ENCODE measurements at regions of chr6 and their contacts with region 1.

Region 1: GRCh38 chr6:17015144-17015543 is 86.7 kb upstream of the STMND1 start:
- DNase-seq: no peak
- H3K4me3 ChIP-seq: no peak overlapping the region
- H3K27ac ChIP-seq: no peak overlapping the region
- H3K4me1 ChIP-seq: peaks cover 22% of the 10 kb centered on the region
- H3K27me3 ChIP-seq: no peaks in the 10 kb centered on the region
- CTCF ChIP-seq: no peak
- POLR2A ChIP-seq: no peak

Region 2: DNA sequence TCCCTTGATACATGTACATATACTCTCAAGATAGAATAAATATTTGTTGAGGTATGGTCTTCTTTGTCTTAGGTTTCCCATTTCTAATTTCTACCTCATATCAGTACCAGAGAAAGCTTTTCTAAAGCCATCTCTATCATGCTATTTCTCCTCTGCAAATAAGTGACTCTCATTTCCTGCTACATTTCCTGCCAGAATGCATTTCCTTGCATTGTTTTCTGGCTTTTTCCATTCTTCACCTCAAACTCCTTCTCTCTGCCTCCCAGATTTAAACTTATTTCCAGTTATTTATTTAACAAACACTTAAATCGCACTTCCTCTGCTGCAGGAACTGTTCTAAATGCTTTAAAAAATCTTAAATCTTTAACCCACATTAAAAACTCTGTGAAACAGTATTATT is 12.3 kb after region 1 on chr6:
- CTCF ChIA-PET with region 1: interaction called, 10 read pairs
- POLR2A ChIA-PET with region 1: no interaction called
- dilution Hi-C with region 1: no loop called
- intact Hi-C with region 1: loop called (anchors 1 kb)
- DNase-seq: peak; percentile 66
- H3K4me3 ChIP-seq: peak overlapping the region in 1 of 3 experiments; percentile 11
- H3K27ac ChIP-seq: peak overlapping the region; percentile 53
- H3K4me1 ChIP-seq: peaks cover 19% of the 10 kb centered on the region
- H3K27me3 ChIP-seq: no peaks in the 10 kb centered on the region
- CTCF ChIP-seq: no peak
- POLR2A ChIP-seq: no peak

Region 3: GRCh38 chr6:17032988-17033634 is 18.0 kb after region 1 on chr6:
- CTCF ChIA-PET with region 1: interaction called, 10 read pairs
- POLR2A ChIA-PET with region 1: no interaction called
- dilution Hi-C with region 1: no loop called
- intact Hi-C with region 1: loop called (anchors 1 kb)
- DNase-seq: peak; percentile 95
- H3K4me3 ChIP-seq: no peak overlapping the region
- H3K27ac ChIP-seq: peak overlapping the region; percentile 69
- H3K4me1 ChIP-seq: peaks cover 14% of the 10 kb centered on the region
- H3K27me3 ChIP-seq: peaks cover 5 to 15% of the 10 kb centered on the region in 2 experiments
- CTCF ChIP-seq: no peak
- POLR2A ChIP-seq: no peak